Activated T-helper 1 cell treated with anti-CD3 and anti-CD28 coated beads, Interleukin-12 subunit alpha, Interleukin-12 subunit beta, Interleukin-2, Interleukin-4 antibody, amounts not matched to agents 30 ng/mL and 10 ng/mL and 1 ng/mL, durations not matched to agents 14 hours and 24 hours and 36 hours (primary cell): ENCODE measurements at regions of chr6 and their contacts with region 1.

Region 1: DNA sequence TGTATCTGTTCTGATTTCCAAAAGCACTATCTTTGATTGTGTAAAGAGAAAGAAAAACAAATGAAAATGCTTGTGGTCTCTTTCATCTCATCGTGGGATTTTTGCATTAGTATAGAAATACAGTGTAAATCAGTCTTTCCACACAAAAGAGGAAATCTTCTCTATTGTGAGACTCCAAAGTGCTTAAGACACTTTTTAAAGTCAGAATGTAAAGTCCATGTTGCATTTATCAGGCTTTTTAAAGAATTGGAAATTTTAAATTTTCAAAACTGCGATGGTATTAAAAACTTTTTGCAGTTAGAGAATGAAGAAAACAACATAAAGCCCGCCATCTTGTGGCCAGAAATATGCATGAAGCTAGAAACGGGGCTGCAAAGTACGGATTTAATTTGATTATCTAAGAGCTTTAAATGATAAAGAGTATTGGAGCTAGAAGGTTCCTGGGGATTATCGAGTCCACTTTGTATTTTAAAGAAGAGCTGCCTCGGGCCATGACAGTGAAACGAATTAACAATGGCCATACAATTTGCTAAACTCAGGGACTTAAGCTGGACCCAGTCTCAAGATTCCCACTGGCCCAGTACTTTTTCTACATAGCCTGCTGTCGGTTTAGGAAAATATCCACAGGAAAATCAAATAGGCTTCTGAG is 339.6 kb downstream of the ARHGAP18 start:
- DNase-seq: no peak
- H3K4me3 Mint-ChIP-seq: no peak overlapping the region
- H3K27ac Mint-ChIP-seq: no peak overlapping the region
- H3K4me1 Mint-ChIP-seq: peaks cover 7% of the 10 kb centered on the region
- H3K27me3 Mint-ChIP-seq: no peaks in the 10 kb centered on the region

Region 2: GRCh38 chr6:128725271-128726233 is 644.8 kb before region 1 on chr6:
- intact Hi-C with region 1: loop called (anchors 1 kb)
- DNase-seq: no peak
- H3K4me3 Mint-ChIP-seq: no peak overlapping the region
- H3K27ac Mint-ChIP-seq: no peak overlapping the region
- H3K4me1 Mint-ChIP-seq: no peaks in the 10 kb centered on the region
- H3K27me3 Mint-ChIP-seq: no peaks in the 10 kb centered on the region

Region 3: DNA sequence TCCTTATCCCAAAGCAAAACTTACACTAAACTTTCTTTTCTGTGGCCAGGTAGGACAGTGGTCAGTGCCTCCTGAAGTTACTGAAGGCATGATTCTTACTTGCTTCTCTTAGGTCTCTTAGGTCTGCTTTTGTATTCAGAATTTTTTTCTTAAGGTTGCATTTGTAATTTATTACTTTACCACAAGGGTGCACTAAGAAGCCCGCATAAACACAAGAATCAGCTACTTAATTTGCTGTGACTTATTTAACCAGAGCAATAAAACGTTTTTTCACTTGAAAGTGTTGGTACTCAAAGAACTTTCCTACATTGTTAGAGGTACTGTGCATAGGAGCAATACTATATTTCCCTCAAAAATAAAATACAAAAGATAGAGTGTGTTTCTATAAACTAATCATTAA is 562.8 kb before region 1 on chr6:
- intact Hi-C with region 1: loop called (anchors 2 kb)
- DNase-seq: no peak
- H3K4me3 Mint-ChIP-seq: no peak overlapping the region
- H3K27ac Mint-ChIP-seq: no peak overlapping the region
- H3K4me1 Mint-ChIP-seq: no peaks in the 10 kb centered on the region
- H3K27me3 Mint-ChIP-seq: no peaks in the 10 kb centered on the region

Region 4: DNA sequence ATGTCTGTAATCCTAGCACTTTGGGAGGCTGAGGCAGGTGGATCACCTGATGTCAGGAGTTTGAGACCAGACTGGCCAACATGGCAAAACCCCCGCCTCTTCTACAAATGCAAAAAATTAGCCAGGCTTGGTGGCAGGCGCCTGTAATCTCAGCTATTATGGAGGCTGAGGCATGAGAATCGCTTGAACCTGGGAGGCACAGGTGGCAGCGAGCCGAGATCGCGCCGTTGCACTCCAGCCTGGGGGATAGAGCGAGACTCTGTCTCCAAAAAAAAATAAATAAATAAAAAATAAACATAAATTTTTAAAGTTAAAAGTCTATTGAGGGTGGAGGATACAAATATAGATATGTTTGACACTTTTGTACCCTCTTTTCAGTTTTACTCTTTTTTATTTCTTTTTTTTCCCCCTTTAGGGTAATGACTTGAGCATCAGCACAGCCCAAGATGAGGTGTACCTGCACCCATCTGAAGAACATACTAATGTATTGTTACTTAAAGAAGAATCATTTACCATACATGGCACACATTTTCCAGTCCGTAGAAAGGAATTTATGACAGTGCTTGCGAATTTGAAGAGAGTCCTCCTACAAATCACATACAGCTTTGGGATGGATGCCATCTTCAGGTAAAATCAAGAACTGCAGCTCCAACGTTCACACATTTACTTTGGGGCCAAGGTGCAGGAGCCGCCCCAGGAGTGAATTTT is 118.6 kb before region 1 on chr6:
- intact Hi-C with region 1: loop called (anchors 1 kb)
- DNase-seq: peak; percentile 27
- H3K4me3 Mint-ChIP-seq: no peak overlapping the region
- H3K27ac Mint-ChIP-seq: no peak overlapping the region
- H3K4me1 Mint-ChIP-seq: peaks cover 19% of the 10 kb centered on the region
- H3K27me3 Mint-ChIP-seq: peaks cover 37% of the 10 kb centered on the region

Region 5: DNA sequence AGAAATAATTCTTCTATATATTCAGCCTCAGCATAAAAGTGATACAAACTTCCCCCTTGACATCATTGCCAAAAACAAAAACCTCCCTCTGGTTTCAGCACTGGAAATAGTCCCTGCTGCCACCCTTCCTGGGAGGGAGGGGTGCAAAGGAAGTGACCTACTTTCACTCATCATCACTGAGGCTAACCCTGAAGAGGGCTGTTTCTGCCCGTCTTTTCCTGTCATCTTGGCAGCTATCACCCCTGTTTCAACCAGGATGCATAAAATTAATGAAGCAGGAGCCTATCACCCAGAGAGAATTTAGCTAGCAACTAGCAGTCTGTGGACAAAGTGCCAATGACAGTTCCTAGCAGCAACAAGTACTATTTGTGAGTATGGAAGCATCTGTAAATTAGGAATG is 89.6 kb before region 1 on chr6:
- intact Hi-C with region 1: loop called (anchors 5 kb)
- DNase-seq: peak; percentile 34
- H3K4me3 Mint-ChIP-seq: peak overlapping the region; percentile 6
- H3K27ac Mint-ChIP-seq: no peak overlapping the region
- H3K4me1 Mint-ChIP-seq: peaks cover 24% of the 10 kb centered on the region
- H3K27me3 Mint-ChIP-seq: peaks cover 13% of the 10 kb centered on the region

Region 6: GRCh38 chr6:129567374-129567773 is 197.0 kb after region 1 on chr6:
- intact Hi-C with region 1: loop called (anchors 2 kb)
- DNase-seq: peak; percentile 9
- H3K4me3 Mint-ChIP-seq: no peak overlapping the region
- H3K27ac Mint-ChIP-seq: no peak overlapping the region
- H3K4me1 Mint-ChIP-seq: no peaks in the 10 kb centered on the region
- H3K27me3 Mint-ChIP-seq: peaks cover 14% of the 10 kb centered on the region